Common myeloid progenitor, CD34-positive (primary cell): ENCODE measurements at regions of chr17 and their contacts with region 1.

Region 1: GRCh38 chr17:77404812-77405581 is 264.2 kb downstream of the SEC14L1 start:
- DNase-seq: peak; percentile 74 to 93 (median 92)
- H3K4me3 ChIP-seq: peak overlapping the region in 5 of 7 experiments; percentile 1 to 55 (median 43)
- H3K27ac ChIP-seq: peak overlapping the region in 1 of 2 experiments; percentile 19
- H3K4me1 ChIP-seq: peaks cover 0 to 100% (median 66%) of the 10 kb centered on the region in 4 experiments
- H3K27me3 ChIP-seq: no peaks in the 10 kb centered on the region

Region 2: DNA sequence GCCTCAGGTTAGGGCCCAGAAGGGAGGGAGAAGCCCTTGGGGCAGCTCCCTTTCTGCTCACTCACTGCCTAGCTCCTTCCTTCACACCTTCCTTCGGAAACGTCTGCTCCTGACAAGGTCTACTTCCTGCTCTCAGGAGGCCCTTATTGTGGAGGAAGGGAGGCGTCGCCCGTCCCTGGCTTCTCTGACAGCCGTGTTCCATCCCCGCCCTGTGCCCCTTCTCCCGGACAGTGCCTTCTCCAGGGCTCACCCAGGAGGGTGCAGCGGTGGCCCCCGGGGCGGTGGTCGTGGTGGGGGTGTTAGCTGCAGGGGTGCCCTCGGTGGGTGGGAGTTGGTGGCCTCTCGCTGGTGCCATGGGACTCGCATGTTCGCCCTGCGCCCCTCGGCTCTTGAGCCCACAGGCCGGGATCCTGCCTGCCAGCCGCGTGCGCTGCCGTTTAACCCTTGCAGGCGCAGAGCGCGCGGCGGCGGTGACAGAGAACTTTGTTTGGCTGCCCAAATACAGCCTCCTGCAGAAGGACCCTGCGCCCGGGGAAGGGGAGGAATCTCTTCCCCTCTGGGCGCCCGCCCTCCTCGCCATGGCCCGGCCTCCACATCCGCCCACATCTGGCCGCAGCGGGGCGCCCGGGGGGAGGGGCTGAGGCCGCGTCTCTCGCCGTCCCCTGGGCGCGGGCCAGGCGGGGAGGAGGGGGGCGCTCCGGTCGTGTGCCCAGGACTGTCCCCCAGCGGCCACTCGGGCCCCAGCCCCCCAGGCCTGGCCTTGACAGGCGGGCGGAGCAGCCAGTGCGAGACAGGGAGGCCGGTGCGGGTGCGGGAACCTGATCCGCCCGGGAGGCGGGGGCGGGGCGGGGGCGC is 32.3 kb before region 1 on chr17:
- CTCF ChIA-PET with region 1: interaction called, 21 read pairs
- POLR2A ChIA-PET with region 1: no interaction called
- DNase-seq: peak; percentile 67 to 86 (median 80)
- H3K4me3 ChIP-seq: peak overlapping the region; percentile 13 to 95 (median 87)
- H3K27ac ChIP-seq: peak overlapping the region; percentile 21 to 89
- H3K4me1 ChIP-seq: peaks cover 12 to 76% (median 52%) of the 10 kb centered on the region in 4 experiments
- H3K27me3 ChIP-seq: no peaks in the 10 kb centered on the region

Region 3: GRCh38 chr17:77420804-77421629 is 16.0 kb after region 1 on chr17:
- CTCF ChIA-PET with region 1: interaction called, 311 read pairs
- POLR2A ChIA-PET with region 1: interaction called, 10 read pairs
- DNase-seq: peak in 2 of 3 donors; percentile 68 to 72
- H3K4me3 ChIP-seq: peak overlapping the region in 3 of 7 experiments; percentile 22 to 33 (median 31)
- H3K27ac ChIP-seq: no peak overlapping the region
- H3K4me1 ChIP-seq: peaks cover 0 to 72% (median 40%) of the 10 kb centered on the region in 4 experiments
- H3K27me3 ChIP-seq: no peaks in the 10 kb centered on the region

Region 4: DNA sequence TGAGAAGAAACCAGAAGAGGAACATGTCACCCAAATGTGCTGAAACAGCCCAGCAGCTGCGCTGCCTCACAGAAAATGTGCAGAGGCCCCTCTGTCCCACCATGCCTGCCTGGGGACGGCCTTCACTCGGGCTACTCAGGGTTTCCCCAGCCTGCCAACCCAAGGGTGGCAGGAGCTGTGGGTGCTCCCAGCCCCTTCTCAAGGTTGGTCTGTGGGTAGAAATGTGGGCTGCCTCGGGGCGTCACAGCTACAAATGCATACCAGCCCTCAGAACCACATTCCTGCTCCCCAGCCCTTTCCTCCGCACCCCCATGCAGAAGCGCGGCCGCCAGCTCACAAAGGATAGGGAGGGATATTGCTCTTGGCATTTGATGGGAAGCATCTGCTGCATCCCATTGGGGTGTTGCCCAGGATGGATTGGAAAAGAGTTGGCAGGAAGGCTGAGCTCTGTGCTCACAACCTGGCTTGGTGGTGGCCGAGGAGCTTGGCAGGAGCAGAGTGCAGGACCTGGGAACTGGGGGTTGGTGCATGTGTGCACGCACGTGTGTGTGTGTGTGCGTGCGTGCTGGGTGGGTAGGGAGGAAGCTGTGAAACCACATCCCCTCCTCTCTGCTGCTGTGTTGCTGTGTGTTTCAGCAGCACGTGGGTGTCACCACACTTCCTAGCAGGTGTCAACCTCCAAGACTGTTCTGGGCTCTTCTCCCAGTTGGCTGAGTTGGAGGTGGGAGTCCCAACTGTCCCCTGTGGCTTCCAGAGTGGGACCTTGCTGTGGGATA is 40.2 kb after region 1 on chr17:
- CTCF ChIA-PET with region 1: interaction called, 13 read pairs
- POLR2A ChIA-PET with region 1: interaction called, 6 read pairs
- DNase-seq: peak; percentile 96 to 99 (median 98)
- H3K4me3 ChIP-seq: peak overlapping the region in 5 of 7 experiments; percentile 9 to 49 (median 48)
- H3K27ac ChIP-seq: peak overlapping the region; percentile 46 to 84
- H3K4me1 ChIP-seq: peaks cover 30 to 87% (median 78%) of the 10 kb centered on the region in 4 experiments
- H3K27me3 ChIP-seq: no peaks in the 10 kb centered on the region

Region 5: GRCh38 chr17:77507111-77507885 is 102.3 kb after region 1 on chr17:
- CTCF ChIA-PET with region 1: no interaction called
- POLR2A ChIA-PET with region 1: no interaction called
- DNase-seq: no peak
- H3K4me3 ChIP-seq: no peak overlapping the region
- H3K27ac ChIP-seq: no peak overlapping the region
- H3K4me1 ChIP-seq: no peaks in the 10 kb centered on the region
- H3K27me3 ChIP-seq: peaks cover 0 to 3% (median 0%) of the 10 kb centered on the region in 5 experiments

Region 6: DNA sequence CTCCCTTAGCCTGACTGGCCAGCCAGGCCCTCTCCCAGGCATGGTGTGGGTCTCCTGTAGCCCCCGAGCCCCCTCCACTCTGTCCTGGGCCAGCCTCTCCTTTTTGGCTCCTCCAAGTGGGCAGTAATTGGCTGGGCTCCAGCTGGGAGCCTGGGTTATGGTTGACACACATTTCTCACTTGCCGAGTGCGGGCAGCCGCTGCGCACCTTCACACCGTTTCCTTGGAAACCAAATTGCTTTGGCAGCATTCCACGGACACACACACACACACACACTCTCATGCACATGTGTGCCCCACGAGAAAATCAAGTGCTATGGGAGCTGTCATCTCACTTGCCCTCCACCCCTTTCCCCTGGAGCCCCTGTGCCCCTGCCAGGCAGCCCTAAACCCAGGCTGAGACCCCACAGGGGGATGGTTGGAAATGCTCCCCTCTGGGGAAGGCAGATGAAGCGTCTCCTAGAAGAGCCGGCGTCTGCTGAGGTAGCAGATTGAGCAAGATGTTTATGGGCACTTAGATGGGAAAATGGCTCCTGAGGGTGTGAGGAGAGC is 150.8 kb after region 1 on chr17:
- CTCF ChIA-PET with region 1: no interaction called
- POLR2A ChIA-PET with region 1: no interaction called
- DNase-seq: peak in 2 of 3 donors; percentile 56 to 76
- H3K4me3 ChIP-seq: no peak overlapping the region
- H3K27ac ChIP-seq: no peak overlapping the region
- H3K4me1 ChIP-seq: peaks cover 0 to 10% (median 2%) of the 10 kb centered on the region in 4 experiments
- H3K27me3 ChIP-seq: peaks cover 0 to 6% (median 0%) of the 10 kb centered on the region in 5 experiments

Region 7: DNA sequence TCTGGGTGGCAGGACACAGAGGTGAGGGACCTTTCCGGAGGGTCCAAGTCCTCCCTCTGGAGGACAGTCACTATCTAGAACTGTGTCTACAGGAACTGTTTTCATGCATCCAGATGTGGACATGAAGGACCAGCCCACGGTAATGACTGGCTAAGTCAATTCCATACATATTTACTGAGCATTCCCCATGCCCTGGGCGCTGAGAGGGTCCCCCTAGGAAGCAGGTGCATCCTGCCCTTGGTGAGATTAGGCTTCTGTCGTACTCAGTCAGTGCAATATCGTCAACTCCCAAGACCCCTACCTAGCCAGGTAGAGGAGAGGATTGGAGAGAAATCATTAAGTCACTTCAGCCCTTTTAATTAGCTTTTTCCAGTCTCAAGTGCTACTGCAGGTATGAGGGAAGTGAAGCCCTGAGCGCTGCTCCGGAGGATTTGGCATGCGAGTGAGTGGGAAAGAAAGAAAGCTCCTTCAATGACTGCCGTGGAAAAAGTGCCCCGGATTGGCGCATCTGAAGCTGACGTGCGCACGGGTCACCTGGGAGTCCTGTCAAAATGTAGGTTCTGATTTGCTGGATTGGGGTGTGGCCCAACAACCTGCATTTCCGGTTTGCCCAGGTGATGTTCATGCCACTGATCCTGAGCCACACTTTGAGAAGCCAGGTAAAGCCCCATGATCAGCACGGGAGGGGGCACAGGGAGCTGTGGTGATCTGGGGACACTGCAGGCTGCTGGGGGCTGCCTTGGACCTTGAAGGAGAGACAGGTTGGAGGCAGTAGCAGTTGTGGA is 186.1 kb after region 1 on chr17:
- CTCF ChIA-PET with region 1: no interaction called
- POLR2A ChIA-PET with region 1: no interaction called
- DNase-seq: peak in 2 of 3 donors; percentile 63 to 77
- H3K4me3 ChIP-seq: peak overlapping the region in 1 of 7 experiments; percentile 5
- H3K27ac ChIP-seq: no peak overlapping the region
- H3K4me1 ChIP-seq: peaks cover 0 to 23% (median 7%) of the 10 kb centered on the region in 4 experiments
- H3K27me3 ChIP-seq: no peaks in the 10 kb centered on the region

Region 8: DNA sequence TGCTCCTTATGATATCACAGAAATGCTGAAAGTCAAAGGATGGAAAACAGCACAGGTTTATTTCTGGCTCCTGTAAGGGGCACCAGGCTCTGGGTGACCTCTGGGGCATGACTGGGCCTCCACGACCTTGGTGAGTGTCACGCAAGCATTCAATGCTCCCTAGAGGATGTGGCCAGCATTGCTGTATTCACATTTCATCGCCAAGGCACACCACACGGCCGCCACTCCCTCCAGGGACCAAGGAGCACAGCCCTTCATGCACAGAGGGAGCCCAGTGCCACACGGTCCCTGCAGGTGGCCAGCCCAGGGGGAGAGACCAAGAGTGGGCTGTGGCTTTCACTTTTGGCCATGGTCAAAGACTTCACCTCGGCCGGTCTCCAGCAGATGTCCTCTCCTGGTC is 416.1 kb after region 1 on chr17:
- CTCF ChIA-PET with region 1: no interaction called
- POLR2A ChIA-PET with region 1: no interaction called
- DNase-seq: peak in 1 of 3 donors; percentile 34
- H3K4me3 ChIP-seq: no peak overlapping the region
- H3K27ac ChIP-seq: no peak overlapping the region
- H3K4me1 ChIP-seq: no peaks in the 10 kb centered on the region
- H3K27me3 ChIP-seq: peaks cover 0 to 3% (median 0%) of the 10 kb centered on the region in 5 experiments